ENCODE measurements at regions of chr2 and their contacts with region 1.

Region 1: DNA sequence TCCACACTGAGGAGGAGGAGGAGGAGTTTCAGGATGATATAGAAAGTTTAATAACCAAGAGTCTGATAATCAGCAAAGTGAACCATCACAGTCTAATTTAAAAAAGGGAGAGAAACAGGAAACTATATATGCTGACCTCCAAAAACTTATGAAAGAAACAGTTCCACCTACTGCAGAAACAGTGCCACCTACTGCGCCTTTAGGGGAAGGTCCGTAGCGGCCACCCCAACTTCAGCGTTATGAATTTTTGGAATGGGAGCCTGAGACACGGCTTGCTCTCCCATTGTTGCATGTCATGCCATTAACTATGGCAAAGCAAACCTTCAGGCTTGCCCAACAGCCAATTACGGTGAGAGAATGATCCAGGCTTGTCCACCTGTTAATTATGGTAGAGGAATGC is 1719.2 kb upstream of the LRRTM1 start:
- DNase-seq: peak; percentile 42
- ATAC-seq: no peak
- H3K4me3 ChIP-seq: no peak overlapping the region
- H3K27ac ChIP-seq: no peak overlapping the region
- H3K4me1 ChIP-seq: no peaks in the 10 kb centered on the region
- H3K27me3 ChIP-seq: no peaks in the 10 kb centered on the region
- CTCF ChIP-seq: peak; percentile 61

Region 2: GRCh38 chr2:81324046-81324445 is 699.7 kb before region 1 on chr2:
- CTCF ChIA-PET with region 1: no interaction called
- POLR2A ChIA-PET with region 1: no interaction called
- intact Hi-C with region 1: loop called (anchors 5 kb)
- DNase-seq: peak; percentile 59
- ATAC-seq: peak; percentile 54
- H3K4me3 ChIP-seq: no peak overlapping the region
- H3K27ac ChIP-seq: no peak overlapping the region
- H3K4me1 ChIP-seq: no peaks in the 10 kb centered on the region
- H3K27me3 ChIP-seq: no peaks in the 10 kb centered on the region
- CTCF ChIP-seq: peak; percentile 68

Region 3: DNA sequence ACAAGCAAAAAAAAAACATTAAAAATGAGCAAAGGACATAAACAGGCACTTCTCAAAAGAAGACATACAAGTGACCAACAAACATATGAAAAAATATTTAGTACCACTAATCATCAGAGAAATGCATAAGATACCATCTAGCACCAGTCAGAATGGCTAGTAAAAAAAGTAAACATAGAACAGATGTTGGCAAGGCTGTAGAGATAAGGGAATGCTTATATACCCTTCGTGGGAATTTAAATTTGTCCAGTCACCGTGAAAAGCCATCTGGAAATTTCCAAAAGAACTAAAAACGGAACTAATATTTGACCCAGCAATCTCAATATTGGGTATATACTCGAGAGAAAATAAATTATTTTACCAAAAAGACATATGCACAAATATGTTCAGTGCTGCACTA is 32.1 kb after region 1 on chr2:
- CTCF ChIA-PET with region 1: no interaction called
- POLR2A ChIA-PET with region 1: no interaction called
- intact Hi-C with region 1: no loop called
- DNase-seq: peak; percentile 4
- ATAC-seq: no peak
- H3K4me3 ChIP-seq: no peak overlapping the region
- H3K27ac ChIP-seq: no peak overlapping the region
- H3K4me1 ChIP-seq: no peaks in the 10 kb centered on the region
- H3K27me3 ChIP-seq: no peaks in the 10 kb centered on the region
- CTCF ChIP-seq: no peak

Region 4: DNA sequence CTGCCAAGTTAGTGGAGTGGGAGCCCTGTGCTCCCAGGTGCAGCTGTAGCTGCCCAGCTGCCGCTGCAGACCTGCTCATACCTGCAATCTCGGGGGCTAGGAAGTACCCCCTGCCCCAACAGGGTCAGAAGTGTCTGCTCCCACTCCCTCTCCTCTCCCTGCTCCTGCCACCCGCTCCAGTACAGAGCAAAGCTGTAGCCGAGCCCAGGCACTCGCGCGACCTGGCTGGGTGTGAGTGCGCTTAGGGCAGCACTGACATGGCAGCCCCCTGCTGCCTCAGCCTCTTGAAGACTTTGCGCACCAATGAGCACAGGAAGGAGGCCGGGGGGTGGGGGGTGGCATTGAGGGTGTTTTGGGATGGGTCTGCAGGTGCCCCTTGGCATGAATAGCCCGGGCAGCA is 483.9 kb after region 1 on chr2:
- CTCF ChIA-PET with region 1: no interaction called
- POLR2A ChIA-PET with region 1: no interaction called
- intact Hi-C with region 1: no loop called
- DNase-seq: no peak
- ATAC-seq: no peak
- H3K4me3 ChIP-seq: no peak overlapping the region
- H3K27ac ChIP-seq: no peak overlapping the region
- H3K4me1 ChIP-seq: no peaks in the 10 kb centered on the region
- H3K27me3 ChIP-seq: no peaks in the 10 kb centered on the region
- CTCF ChIP-seq: no peak